Heart left ventricle (tissue), 16 donors: ENCODE measurements at regions of chr13 and their contacts with region 1.

Region 1: GRCh38 chr13:30125422-30126073 is 181.8 kb downstream of the KATNAL1 start:
- DNase-seq: no peak
- ATAC-seq: peak in 1 of 4 donors; percentile 45
- H3K4me3 ChIP-seq: no peak overlapping the region
- H3K27ac ChIP-seq: peak overlapping the region in 1 of 12 donors; percentile 72
- H3K4me1 ChIP-seq: peaks cover 0 to 7% (median 0%) of the 10 kb centered on the region in 12 donors
- H3K27me3 ChIP-seq: peaks cover 0 to 13% (median 0%) of the 10 kb centered on the region in 9 donors
- CTCF ChIP-seq: no peak
- POLR2A ChIP-seq: no peak

Region 2: GRCh38 chr13:30006246-30006645 is 119.3 kb before region 1 on chr13:
- intact Hi-C with region 1: no loop called
- DNase-seq: no peak
- ATAC-seq: no peak
- H3K4me3 ChIP-seq: no peak overlapping the region
- H3K27ac ChIP-seq: no peak overlapping the region
- H3K4me1 ChIP-seq: no peaks in the 10 kb centered on the region
- H3K27me3 ChIP-seq: peaks cover 0 to 19% (median 0%) of the 10 kb centered on the region in 9 donors
- CTCF ChIP-seq: no peak
- POLR2A ChIP-seq: no peak

Region 3: DNA sequence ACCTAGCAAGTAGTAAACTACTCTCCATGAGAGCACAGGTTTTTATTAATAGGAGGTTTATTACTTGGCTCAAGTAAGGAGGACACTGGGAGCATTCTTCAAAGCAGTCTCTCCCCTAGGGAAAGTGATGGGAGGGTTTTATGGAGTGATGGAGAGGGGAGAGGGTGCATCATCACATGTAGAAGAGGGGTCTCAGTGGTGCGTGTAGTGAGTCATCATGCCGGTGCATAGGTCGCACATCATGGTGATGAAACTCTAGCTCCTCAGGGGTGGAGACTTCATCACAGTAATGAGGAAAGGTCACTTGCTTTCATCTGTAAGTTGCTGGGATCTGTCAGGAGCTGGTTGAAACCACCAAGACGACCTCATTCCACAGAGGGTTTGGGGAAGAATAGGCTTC is 64.3 kb before region 1 on chr13:
- intact Hi-C with region 1: no loop called
- DNase-seq: no peak
- ATAC-seq: no peak
- H3K4me3 ChIP-seq: no peak overlapping the region
- H3K27ac ChIP-seq: no peak overlapping the region
- H3K4me1 ChIP-seq: no peaks in the 10 kb centered on the region
- H3K27me3 ChIP-seq: peaks cover 0 to 4% (median 0%) of the 10 kb centered on the region in 9 donors
- CTCF ChIP-seq: no peak
- POLR2A ChIP-seq: no peak

Region 4: DNA sequence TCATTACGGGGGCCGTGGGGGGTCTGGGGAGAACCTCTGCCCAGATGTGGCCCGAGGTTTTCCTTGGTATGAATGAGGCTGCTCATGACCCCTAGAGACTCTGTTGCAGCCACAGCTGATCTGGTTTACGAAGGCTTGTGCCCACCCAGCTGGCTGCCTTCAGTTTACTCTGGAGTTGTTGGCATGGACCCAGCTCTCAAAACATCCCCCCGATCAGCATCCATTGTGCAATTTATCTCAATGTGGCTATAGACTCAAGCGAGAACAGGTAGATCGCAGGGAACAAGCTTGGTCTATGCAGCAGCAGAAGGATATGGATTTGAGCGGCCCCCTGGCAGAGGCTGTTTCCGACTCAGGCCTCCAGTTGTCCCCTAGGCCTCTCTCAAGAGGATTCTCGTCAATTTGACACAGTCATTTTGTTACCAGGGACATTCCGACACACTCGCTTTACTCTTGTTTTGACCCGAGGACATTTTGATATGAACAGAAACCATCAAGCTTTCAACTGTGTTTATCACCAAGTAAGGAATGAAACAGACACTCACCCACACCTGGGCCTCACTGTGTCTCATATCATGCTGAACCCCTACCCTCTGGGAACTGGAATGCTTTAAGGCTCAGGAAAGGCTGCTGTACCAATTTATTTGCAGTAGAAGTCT is 20.3 kb after region 1 on chr13:
- intact Hi-C with region 1: no loop called
- DNase-seq: no peak
- ATAC-seq: no peak
- H3K4me3 ChIP-seq: no peak overlapping the region
- H3K27ac ChIP-seq: peak overlapping the region in 1 of 12 donors; percentile 74
- H3K4me1 ChIP-seq: peaks cover 0 to 51% (median 6%) of the 10 kb centered on the region in 12 donors
- H3K27me3 ChIP-seq: no peaks in the 10 kb centered on the region
- CTCF ChIP-seq: no peak
- POLR2A ChIP-seq: no peak

Region 5: DNA sequence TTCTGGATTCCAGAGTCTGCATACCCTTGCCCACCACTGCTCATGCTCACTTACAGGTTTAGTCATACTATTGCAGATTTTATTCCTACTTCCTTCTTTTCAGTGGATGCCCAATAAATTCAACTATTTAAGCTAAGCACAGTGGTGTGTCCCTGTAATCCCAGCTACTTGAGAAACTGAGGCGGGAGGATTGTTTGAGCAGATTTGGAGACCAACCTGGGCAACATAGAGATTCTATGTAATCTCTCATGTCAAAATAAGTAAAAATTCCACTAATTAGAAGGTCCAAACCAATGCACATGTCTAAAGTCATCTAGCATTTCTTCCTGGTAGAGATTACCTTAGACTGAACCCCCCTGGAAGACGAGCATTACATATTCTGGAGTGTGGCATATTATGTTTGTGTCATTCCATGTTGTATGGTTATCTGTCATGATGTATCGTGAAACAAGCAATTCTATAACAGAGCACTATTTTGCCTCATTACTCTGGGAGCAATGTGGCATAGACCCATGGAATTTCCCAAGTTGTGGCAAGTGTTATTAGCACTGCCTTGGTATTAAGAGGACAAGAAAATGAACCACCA is 331.9 kb after region 1 on chr13:
- intact Hi-C with region 1: loop called (anchors 5 kb)
- DNase-seq: no peak
- ATAC-seq: no peak
- H3K4me3 ChIP-seq: no peak overlapping the region
- H3K27ac ChIP-seq: no peak overlapping the region
- H3K4me1 ChIP-seq: peaks cover 0 to 20% (median 11%) of the 10 kb centered on the region in 12 donors
- H3K27me3 ChIP-seq: no peaks in the 10 kb centered on the region
- CTCF ChIP-seq: no peak
- POLR2A ChIP-seq: no peak

Region 6: DNA sequence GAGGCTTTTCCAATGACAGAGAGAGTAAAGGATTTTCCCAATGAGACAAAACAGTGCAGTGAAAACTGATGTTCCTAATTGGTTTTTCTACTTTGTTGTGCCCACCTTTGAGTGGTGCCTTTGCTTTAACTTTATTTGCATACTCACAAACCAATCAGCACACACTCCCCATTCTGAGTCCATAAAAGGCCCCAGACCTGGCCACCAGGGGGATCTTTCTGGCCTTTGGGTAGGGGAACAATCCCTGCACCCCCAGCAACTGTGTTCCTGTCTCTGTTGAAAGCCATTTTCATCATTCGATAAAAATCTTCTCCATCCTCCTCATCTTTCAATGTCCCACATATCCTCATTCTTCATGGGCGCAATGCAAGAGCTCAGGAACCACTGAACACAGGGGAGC is 1327.0 kb after region 1 on chr13:
- intact Hi-C with region 1: no loop called
- DNase-seq: no peak
- ATAC-seq: no peak
- H3K4me3 ChIP-seq: no peak overlapping the region
- H3K27ac ChIP-seq: no peak overlapping the region
- H3K4me1 ChIP-seq: no peaks in the 10 kb centered on the region
- H3K27me3 ChIP-seq: peaks cover 0 to 6% (median 0%) of the 10 kb centered on the region in 9 donors
- CTCF ChIP-seq: no peak
- POLR2A ChIP-seq: no peak